ENCODE measurements at regions of chr16 and their contacts with region 1.

Region 1: GRCh38 chr16:57128771-57129389 is 36.5 kb downstream of the CPNE2 start:
- DNase-seq: peak; percentile 90
- ATAC-seq: peak; percentile 86
- H3K4me3 Mint-ChIP-seq: peak overlapping the region; percentile 72
- H3K27ac Mint-ChIP-seq: peak overlapping the region; percentile 95
- H3K4me1 Mint-ChIP-seq: peaks cover 89% of the 10 kb centered on the region
- H3K27me3 Mint-ChIP-seq: no peaks in the 10 kb centered on the region
- CTCF ChIP-seq: no peak

Region 2: GRCh38 chr16:57141822-57142631 is 13.1 kb after region 1 on chr16:
- CTCF ChIA-PET with region 1: interaction called, 4 read pairs
- POLR2A ChIA-PET with region 1: interaction called, 23 read pairs
- intact Hi-C with region 1: no loop called
- DNase-seq: peak; percentile 55
- ATAC-seq: peak; percentile 81
- H3K4me3 Mint-ChIP-seq: peak overlapping the region; percentile 53
- H3K27ac Mint-ChIP-seq: peak overlapping the region; percentile 95
- H3K4me1 Mint-ChIP-seq: peaks cover 30% of the 10 kb centered on the region
- H3K27me3 Mint-ChIP-seq: no peaks in the 10 kb centered on the region
- CTCF ChIP-seq: no peak

Region 3: GRCh38 chr16:57213462-57213861 is 84.6 kb after region 1 on chr16:
- CTCF ChIA-PET with region 1: no interaction called
- POLR2A ChIA-PET with region 1: no interaction called
- intact Hi-C with region 1: no loop called
- DNase-seq: no peak
- ATAC-seq: no peak
- H3K4me3 Mint-ChIP-seq: no peak overlapping the region
- H3K27ac Mint-ChIP-seq: no peak overlapping the region
- H3K4me1 Mint-ChIP-seq: peaks cover 2% of the 10 kb centered on the region
- H3K27me3 Mint-ChIP-seq: no peaks in the 10 kb centered on the region
- CTCF ChIP-seq: no peak

Measured in activated CD8-positive, alpha-beta T cell treated with anti-CD3 and anti-CD28 coated beads for 36 hours (primary cell).